CD4-positive, alpha-beta T cell (primary cell): ENCODE measurements at regions of chr4 and their contacts with region 1.

Region 1: GRCh38 chr4:88523325-88524129 is at the start of gene PYURF:
- DNase-seq: peak; percentile 36 to 88 (median 69)
- ATAC-seq: peak; percentile 67
- H3K4me3 ChIP-seq: peak within 1 kb of the TSS; percentile 82
- H3K4me3 Mint-ChIP-seq: peak within 1 kb of the TSS; percentile 97
- H3K27ac ChIP-seq: peak within 1 kb of the TSS; percentile 42 to 59
- H3K27ac Mint-ChIP-seq: peak within 1 kb of the TSS; percentile 88
- H3K4me1 ChIP-seq: peaks cover 20% of the 10 kb centered on the region
- H3K4me1 Mint-ChIP-seq: peaks cover 58% of the 10 kb centered on the region
- H3K27me3 ChIP-seq: no peaks in the 10 kb centered on the region
- H3K27me3 Mint-ChIP-seq: no peaks in the 10 kb centered on the region
- CTCF ChIP-seq: no peak
- total RNA-seq, gene PYURF: 25.3 to 26.8 TPM

Region 2: GRCh38 chr4:86908251-86908657 is 1615.3 kb before region 1 on chr4:
- CTCF ChIA-PET with region 1: no interaction called
- POLR2A ChIA-PET with region 1: no interaction called
- intact Hi-C with region 1: no loop called
- DNase-seq: peak in 3 of 14 experiments; percentile 24 to 29 (median 26)
- ATAC-seq: peak; percentile 29
- H3K4me3 ChIP-seq: peak overlapping the region; percentile 11
- H3K4me3 Mint-ChIP-seq: peak overlapping the region; percentile 82
- H3K27ac ChIP-seq: no peak overlapping the region
- H3K27ac Mint-ChIP-seq: peak overlapping the region; percentile 37
- H3K4me1 ChIP-seq: peaks cover 14% of the 10 kb centered on the region
- H3K4me1 Mint-ChIP-seq: peaks cover 24% of the 10 kb centered on the region
- H3K27me3 ChIP-seq: peaks cover 0 to 2% of the 10 kb centered on the region in 2 experiments
- H3K27me3 Mint-ChIP-seq: no peaks in the 10 kb centered on the region
- CTCF ChIP-seq: no peak

Region 3: GRCh38 chr4:87745064-87745807 is 778.3 kb before region 1 on chr4:
- CTCF ChIA-PET with region 1: no interaction called
- POLR2A ChIA-PET with region 1: no interaction called
- intact Hi-C with region 1: no loop called
- DNase-seq: peak in 1 of 14 experiments; percentile 5
- ATAC-seq: no peak
- H3K4me3 ChIP-seq: no peak overlapping the region
- H3K4me3 Mint-ChIP-seq: no peak overlapping the region
- H3K27ac ChIP-seq: no peak overlapping the region
- H3K27ac Mint-ChIP-seq: no peak overlapping the region
- H3K4me1 ChIP-seq: no peaks in the 10 kb centered on the region
- H3K4me1 Mint-ChIP-seq: no peaks in the 10 kb centered on the region
- H3K27me3 ChIP-seq: no peaks in the 10 kb centered on the region
- H3K27me3 Mint-ChIP-seq: peaks cover 4% of the 10 kb centered on the region
- CTCF ChIP-seq: no peak

Region 4: GRCh38 chr4:88456757-88457306 is 66.7 kb before region 1 on chr4 and contains the start of gene HERC5:
- CTCF ChIA-PET with region 1: no interaction called
- POLR2A ChIA-PET with region 1: interaction called, 5 read pairs
- intact Hi-C with region 1: loop called in 1 of 2 experiments (anchors 5 kb)
- DNase-seq: peak; percentile 83 to 97 (median 90)
- ATAC-seq: peak; percentile 96
- H3K4me3 ChIP-seq: peak within 1 kb of the TSS; percentile 85
- H3K4me3 Mint-ChIP-seq: peak within 1 kb of the TSS; percentile 96
- H3K27ac ChIP-seq: peak within 1 kb of the TSS; percentile 6 to 65
- H3K27ac Mint-ChIP-seq: peak within 1 kb of the TSS; percentile 85
- H3K4me1 ChIP-seq: peaks cover 20% of the 10 kb centered on the region
- H3K4me1 Mint-ChIP-seq: peaks cover 42% of the 10 kb centered on the region
- H3K27me3 ChIP-seq: no peaks in the 10 kb centered on the region
- H3K27me3 Mint-ChIP-seq: no peaks in the 10 kb centered on the region
- CTCF ChIP-seq: peak; percentile 32
- total RNA-seq, gene HERC5: 23.6 to 23.9 TPM

Region 5: DNA sequence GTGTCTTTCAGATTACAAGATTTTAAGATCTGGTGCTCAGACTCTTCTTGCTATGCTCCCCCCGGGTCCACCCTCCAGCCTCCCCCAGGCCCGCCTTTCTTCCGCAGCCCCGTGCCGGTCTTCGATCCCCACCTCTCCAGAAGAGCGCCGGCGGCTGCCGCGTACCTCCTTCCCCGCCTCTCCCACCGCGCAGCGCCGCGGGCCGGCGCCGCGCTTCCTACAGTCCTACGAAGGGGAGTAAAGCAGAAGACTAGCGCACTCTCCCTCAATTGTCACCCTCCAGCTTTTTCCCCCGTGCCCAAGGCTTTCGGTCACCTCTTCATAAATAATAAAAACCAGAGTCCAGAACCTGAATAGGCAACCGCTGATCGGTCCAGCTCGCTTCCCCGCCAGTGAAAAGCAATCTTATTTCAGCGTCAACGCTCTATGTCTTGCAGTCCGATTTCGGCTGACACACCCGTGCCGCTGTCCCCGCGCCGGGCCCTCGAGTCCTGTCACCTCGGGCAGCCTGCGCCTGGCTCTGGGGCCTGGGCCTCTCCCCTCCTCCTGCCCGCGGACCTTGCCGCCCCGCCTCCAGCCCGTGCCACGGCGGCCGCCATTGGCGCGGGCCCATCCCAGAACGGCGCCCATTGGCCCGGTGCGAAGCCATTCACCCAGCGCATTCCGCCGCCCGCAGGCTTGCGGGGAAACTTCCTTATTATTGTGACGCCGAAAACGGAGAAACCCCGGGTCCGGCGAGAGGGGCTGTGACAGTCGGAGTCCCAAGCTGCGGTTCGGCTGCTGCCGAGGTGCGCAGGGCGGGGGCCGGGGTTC is 68.5 kb after region 1 on chr4 and contains the start of gene HERC3:
- CTCF ChIA-PET with region 1: no interaction called
- POLR2A ChIA-PET with region 1: no interaction called
- intact Hi-C with region 1: loop called in 1 of 2 experiments (anchors 5 kb)
- DNase-seq: peak; percentile 76 to 95 (median 86)
- ATAC-seq: peak; percentile 84
- H3K4me3 ChIP-seq: peak within 1 kb of the TSS; percentile 96
- H3K4me3 Mint-ChIP-seq: peak within 1 kb of the TSS; percentile 100
- H3K27ac ChIP-seq: peak within 1 kb of the TSS; percentile 83 to 93
- H3K27ac Mint-ChIP-seq: peak within 1 kb of the TSS; percentile 99
- H3K4me1 ChIP-seq: peaks cover 23% of the 10 kb centered on the region
- H3K4me1 Mint-ChIP-seq: peaks cover 60% of the 10 kb centered on the region
- H3K27me3 ChIP-seq: no peaks in the 10 kb centered on the region
- H3K27me3 Mint-ChIP-seq: no peaks in the 10 kb centered on the region
- CTCF ChIP-seq: no peak
- total RNA-seq, gene HERC3: 63.1 to 66.4 TPM

Region 6: DNA sequence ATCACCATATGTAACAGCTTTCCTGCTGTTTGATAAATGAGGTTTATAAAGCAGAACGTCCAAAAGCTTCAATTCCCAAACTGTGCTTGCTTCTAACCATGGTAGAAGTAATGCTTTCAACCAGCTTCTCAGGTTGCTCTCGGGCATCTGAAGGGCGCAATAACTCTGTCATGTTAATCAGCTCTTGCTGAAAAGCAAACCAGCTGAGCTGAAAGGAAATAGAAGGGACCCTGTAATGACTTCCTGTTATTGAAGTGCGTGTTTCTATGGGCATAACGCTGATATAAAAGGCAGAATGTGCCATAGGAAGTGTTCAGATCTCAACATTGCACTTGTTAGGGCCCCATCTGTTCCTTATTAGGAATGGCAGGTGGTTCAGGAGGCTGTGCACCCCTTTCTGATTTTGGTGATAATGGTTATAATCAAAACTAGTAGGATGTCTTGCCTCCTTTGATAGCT is 89.9 kb after region 1 on chr4:
- CTCF ChIA-PET with region 1: no interaction called
- POLR2A ChIA-PET with region 1: interaction called, 11 read pairs
- intact Hi-C with region 1: no loop called
- DNase-seq: peak in 12 of 14 experiments; percentile 20 to 90 (median 40)
- ATAC-seq: peak; percentile 95
- H3K4me3 ChIP-seq: peak overlapping the region; percentile 30
- H3K4me3 Mint-ChIP-seq: peak overlapping the region; percentile 80
- H3K27ac ChIP-seq: peak overlapping the region; percentile 80 to 87
- H3K27ac Mint-ChIP-seq: peak overlapping the region; percentile 95
- H3K4me1 ChIP-seq: peaks cover 44% of the 10 kb centered on the region
- H3K4me1 Mint-ChIP-seq: peaks cover 86% of the 10 kb centered on the region
- H3K27me3 ChIP-seq: no peaks in the 10 kb centered on the region
- H3K27me3 Mint-ChIP-seq: no peaks in the 10 kb centered on the region
- CTCF ChIP-seq: no peak

Region 7: GRCh38 chr4:88659055-88659889 is 135.7 kb after region 1 on chr4:
- CTCF ChIA-PET with region 1: interaction called, 9 read pairs
- POLR2A ChIA-PET with region 1: no interaction called
- intact Hi-C with region 1: loop called in 1 of 2 experiments (anchors 1 kb)
- DNase-seq: peak in 12 of 14 experiments; percentile 11 to 68 (median 28)
- ATAC-seq: peak; percentile 88
- H3K4me3 ChIP-seq: no peak overlapping the region
- H3K4me3 Mint-ChIP-seq: no peak overlapping the region
- H3K27ac ChIP-seq: no peak overlapping the region
- H3K27ac Mint-ChIP-seq: peak overlapping the region; percentile 34
- H3K4me1 ChIP-seq: no peaks in the 10 kb centered on the region
- H3K4me1 Mint-ChIP-seq: peaks cover 33% of the 10 kb centered on the region
- H3K27me3 ChIP-seq: no peaks in the 10 kb centered on the region
- H3K27me3 Mint-ChIP-seq: no peaks in the 10 kb centered on the region
- CTCF ChIP-seq: peak; percentile 68

Region 8: GRCh38 chr4:88792268-88792781 is 268.8 kb after region 1 on chr4:
- CTCF ChIA-PET with region 1: no interaction called
- POLR2A ChIA-PET with region 1: no interaction called
- intact Hi-C with region 1: loop called in 1 of 2 experiments (anchors 10 kb)
- DNase-seq: peak in 2 of 14 experiments; percentile 9 to 33
- ATAC-seq: no peak
- H3K4me3 ChIP-seq: no peak overlapping the region
- H3K4me3 Mint-ChIP-seq: no peak overlapping the region
- H3K27ac ChIP-seq: no peak overlapping the region
- H3K27ac Mint-ChIP-seq: no peak overlapping the region
- H3K4me1 ChIP-seq: no peaks in the 10 kb centered on the region
- H3K4me1 Mint-ChIP-seq: no peaks in the 10 kb centered on the region
- H3K27me3 ChIP-seq: no peaks in the 10 kb centered on the region
- H3K27me3 Mint-ChIP-seq: no peaks in the 10 kb centered on the region
- CTCF ChIP-seq: no peak

Region 9: GRCh38 chr4:89024051-89024675 is 500.6 kb after region 1 on chr4:
- CTCF ChIA-PET with region 1: no interaction called
- POLR2A ChIA-PET with region 1: no interaction called
- intact Hi-C with region 1: loop called (anchors 1 to 5 kb)
- DNase-seq: peak in 12 of 14 experiments; percentile 15 to 86 (median 42)
- ATAC-seq: peak; percentile 100
- H3K4me3 ChIP-seq: no peak overlapping the region
- H3K4me3 Mint-ChIP-seq: no peak overlapping the region
- H3K27ac ChIP-seq: no peak overlapping the region
- H3K27ac Mint-ChIP-seq: no peak overlapping the region
- H3K4me1 ChIP-seq: peaks cover 3% of the 10 kb centered on the region
- H3K4me1 Mint-ChIP-seq: peaks cover 2% of the 10 kb centered on the region
- H3K27me3 ChIP-seq: no peaks in the 10 kb centered on the region
- H3K27me3 Mint-ChIP-seq: no peaks in the 10 kb centered on the region
- CTCF ChIP-seq: peak; percentile 83